ENCODE measurements at regions of chr1 and their contacts with region 1.

Region 1: GRCh38 chr1:145845514-145846161 is at the start of gene NUDT17:
- DNase-seq: peak; percentile 83
- CTCF ChIP-seq: peak; percentile 89

Region 2: DNA sequence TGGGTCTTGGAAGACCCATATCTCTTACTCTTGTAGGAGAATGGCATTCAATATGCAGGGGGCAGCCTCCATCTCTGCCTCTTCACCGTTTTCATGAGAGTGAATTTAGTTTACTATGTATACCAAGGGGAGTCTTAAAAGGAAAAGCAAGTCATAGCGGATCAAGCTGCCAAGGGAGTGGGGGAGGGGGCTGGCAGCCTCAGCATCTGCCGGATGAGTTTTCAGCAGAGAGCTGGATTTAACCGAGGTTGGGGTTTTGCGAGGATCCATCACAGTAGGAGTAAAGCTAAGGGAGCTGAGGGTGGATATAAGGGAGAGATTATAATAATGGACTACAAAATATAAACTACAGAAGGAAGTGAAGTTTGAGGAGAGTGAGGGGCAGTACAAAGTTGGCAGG is 116.4 kb before region 1 on chr1:
- CTCF ChIA-PET with region 1: no interaction called
- POLR2A ChIA-PET with region 1: no interaction called
- DNase-seq: no peak
- CTCF ChIP-seq: no peak

Region 3: DNA sequence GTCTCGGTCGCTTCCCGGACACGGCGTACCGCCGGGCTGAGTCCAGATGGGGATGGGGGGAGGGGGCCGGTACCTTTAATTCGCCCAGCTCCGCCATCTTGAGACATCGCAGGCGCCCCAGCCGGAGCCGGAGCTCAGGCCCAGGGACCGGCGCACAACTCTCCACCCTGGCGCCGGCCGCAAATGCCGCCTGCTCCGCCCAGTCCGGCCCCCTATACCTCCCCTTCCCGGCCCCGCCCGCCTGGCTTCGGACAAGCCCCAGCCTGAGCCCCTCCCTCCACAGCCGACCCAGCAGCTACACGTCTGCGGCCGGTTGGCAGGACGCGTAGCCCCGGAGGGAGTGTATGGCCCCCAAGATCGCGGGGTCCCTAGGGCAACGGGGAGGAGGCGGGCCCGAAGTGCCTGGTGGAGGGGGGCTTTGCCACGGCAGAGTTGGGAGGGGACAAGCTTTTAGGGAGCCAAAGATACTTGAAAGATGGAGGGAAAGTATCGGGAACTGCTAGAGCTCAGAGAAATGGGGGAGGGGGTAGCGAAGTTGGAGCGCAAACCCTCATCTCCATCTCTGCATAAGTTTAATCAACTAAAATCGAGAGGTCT is 13.4 kb after region 1 on chr1 and contains the start of gene PIAS3:
- CTCF ChIA-PET with region 1: interaction called, 248 read pairs
- POLR2A ChIA-PET with region 1: interaction called, 13 read pairs
- DNase-seq: peak; percentile 97
- CTCF ChIP-seq: no peak

Region 4: DNA sequence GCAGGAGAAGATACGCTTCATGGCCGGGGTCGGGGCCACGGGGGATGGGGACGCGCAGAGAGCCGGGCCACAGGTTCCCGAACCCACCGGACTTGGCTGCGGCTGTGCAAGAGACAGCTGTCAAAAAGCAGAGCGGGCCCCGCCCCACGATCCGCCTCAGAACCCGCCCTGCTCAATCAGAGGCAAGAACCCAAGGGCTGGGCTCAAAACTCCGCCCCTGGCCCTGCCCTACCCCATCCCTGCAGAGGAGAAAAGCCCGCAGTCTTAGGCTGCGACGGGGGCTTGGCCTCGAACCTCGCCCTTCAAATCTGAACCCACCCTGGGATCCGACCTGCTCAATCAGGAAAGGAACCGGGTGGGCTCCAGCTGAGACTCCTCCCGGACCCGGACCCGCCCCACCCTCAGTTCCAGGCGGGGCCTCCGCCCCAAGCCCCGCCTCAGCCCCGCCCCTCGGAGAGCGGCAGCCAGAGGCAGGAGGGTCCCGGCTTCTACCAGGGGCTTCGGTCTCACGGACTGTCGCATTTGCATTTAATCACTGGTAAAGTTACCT is 40.2 kb after region 1 on chr1 and contains the start of gene ANKRD35:
- CTCF ChIA-PET with region 1: interaction called, 33 read pairs
- POLR2A ChIA-PET with region 1: no interaction called
- DNase-seq: peak; percentile 96
- CTCF ChIP-seq: no peak

Region 5: DNA sequence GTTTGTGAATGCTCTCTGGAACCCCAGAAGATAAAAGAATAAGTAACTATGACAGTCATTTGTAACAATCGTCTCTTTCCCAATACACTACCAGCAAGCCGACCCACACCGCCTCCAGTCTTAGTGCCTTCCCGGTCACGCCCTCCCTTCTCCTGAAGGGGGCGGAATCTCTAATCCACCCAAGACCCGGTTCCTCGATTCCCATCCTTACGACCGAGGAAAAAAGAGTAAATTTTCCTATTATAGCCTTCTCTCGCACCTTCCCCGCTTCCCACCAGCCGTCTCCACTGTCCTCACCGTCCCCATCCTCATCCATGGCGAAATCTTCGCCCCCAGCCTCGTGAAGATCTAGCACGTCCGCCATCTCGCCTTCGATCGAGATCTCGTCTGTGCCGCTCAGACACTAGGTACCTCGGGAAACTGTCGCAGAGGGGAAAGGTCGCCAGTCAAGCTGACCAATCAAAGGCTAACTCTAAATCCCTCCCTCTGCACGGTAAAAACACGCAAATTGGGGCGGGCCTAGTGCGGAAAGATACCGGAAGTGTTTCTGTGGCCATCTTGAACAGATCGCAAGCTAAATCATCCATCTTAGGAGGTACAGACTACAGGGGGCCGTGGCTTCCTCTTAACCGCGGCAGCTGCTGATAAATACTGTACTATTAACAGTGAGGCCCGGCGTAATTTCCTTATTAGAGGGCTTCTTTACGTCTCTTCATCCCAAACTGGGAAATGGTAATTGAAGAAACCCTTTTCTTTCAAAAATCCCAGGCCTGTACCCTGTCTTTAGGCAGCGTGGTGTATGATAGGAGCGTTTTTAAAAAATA is 81.6 kb after region 1 on chr1 and contains the start of gene RBM8A:
- CTCF ChIA-PET with region 1: interaction called, 10 read pairs
- POLR2A ChIA-PET with region 1: no interaction called
- DNase-seq: peak; percentile 89
- CTCF ChIP-seq: peak; percentile 42

Region 6: DNA sequence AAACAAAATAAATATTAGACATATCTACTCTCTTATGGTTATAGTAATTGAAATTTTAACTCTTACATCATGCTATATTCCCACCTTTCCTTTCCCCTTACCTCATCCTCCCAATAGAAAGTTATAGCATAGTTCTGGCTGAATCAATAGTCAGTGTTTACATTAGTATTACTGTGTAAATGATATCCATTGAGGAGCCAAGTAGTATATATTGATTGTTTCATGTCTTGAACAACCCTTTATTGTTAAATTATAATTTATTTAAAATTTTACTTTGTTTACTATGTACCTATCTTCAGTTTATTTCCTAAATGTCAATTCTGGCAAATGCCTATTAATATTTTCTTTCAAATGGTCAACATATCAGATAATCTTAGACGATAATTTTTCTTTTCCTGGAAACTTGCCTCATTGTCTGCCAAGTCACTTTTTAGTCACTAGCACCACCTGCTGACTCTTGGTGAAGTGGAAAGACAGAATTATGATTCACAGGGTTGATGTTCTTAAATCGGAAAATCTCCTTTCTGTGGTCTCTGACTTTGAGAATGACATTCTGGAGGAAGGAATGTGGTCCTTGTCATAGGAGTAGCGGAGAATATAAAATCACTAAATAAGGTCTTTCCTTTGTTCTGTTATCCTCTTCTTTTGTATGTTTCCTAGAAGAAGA is 167.2 kb after region 1 on chr1:
- CTCF ChIA-PET with region 1: interaction called, 53 read pairs
- POLR2A ChIA-PET with region 1: no interaction called
- DNase-seq: peak; percentile 65
- CTCF ChIP-seq: peak; percentile 77